Naive thymus-derived CD4-positive, alpha-beta T cell (primary cell): ENCODE measurements at regions of chr22 and their contacts with region 1.

Region 1: DNA sequence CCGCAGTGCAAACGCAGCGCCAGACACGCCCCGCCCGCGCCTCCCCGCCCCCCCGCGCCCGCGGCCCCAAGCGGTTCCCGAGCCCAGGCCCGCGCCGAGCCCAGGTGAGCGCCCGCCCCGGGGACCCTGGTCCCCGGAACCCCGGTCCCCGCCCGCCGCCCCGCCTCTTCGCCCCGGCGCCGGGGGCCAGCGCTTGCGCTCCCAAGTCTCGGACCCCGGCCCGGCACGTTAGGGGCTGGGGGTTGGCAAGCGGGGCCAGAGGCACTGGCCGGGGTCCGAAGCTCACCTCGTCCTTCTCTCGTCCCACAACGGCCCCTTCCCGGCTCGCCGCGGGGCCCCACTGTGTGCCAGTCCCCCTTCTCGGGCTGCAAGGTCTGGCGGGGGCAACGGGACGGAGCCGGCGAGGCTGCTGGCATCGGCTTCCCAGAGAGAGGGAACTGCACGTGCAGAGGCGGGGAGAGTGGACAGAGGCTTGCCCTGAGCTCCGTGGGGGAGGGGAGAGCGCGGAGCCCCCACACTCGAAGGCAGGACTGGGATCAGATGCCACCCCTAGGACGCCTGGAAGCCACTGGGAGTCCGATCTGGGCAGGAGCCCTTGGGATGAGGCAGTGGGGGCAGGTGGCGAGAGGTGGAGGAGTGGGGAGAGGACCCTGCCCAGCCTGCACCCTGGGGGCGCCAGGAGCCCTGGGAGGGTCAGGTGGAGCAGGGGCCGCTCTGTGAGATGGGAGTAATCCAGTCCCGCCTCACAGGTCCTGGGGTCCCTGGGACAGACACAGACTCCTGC is 1.8 kb upstream of the AIFM3 start:
- DNase-seq: no peak
- ATAC-seq: peak; percentile 44
- H3K4me3 ChIP-seq: no peak overlapping the region
- H3K4me3 Mint-ChIP-seq: peak overlapping the region in 8 of 10 donors; percentile 7 to 71 (median 52)
- H3K27ac ChIP-seq: peak overlapping the region; percentile 29
- H3K27ac Mint-ChIP-seq: no peak overlapping the region
- H3K4me1 ChIP-seq: no peaks in the 10 kb centered on the region
- H3K4me1 Mint-ChIP-seq: peaks cover 0 to 17% (median 12%) of the 10 kb centered on the region in 7 donors
- H3K27me3 ChIP-seq: no peaks in the 10 kb centered on the region
- H3K27me3 Mint-ChIP-seq: peaks cover 2 to 31% (median 8%) of the 10 kb centered on the region in 5 donors

Region 2: DNA sequence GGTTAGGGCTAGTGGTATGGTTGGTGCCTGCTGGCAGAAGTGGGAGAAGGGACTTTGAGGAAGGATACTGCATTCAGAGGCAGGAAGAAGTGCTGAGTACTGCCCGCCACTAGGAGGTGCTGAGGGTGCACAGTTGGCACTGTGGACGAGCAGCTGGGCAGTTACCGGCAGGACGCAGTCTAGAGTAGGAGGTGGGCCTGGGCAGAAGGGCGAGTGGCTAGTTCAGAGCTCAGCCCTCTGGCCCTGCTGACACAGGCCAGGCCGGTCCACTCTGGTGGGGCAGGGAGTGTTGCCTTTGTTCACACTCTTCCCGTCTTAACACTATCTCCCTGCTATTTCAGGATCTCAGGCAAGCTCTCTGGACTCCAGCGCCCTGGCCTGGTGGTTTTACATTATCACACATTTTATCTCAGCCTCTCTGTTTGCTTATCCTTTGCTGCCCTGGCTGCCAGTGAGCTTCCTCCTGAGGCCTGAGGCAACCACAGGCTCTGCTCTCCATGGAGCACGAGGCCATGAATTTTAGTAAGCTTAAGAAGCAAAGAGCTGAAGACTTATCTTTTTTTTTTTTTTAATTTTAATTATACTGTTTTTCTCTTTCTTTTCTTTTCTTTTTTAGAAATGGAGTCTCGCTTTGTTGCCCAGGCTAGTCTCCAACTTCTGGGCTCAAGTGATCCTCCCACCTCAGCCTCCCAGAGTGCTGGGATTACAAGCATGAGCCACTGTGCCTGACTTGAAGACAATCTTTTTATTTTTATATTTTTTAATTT is 79.6 kb before region 1 on chr22:
- CTCF ChIA-PET with region 1: no interaction called
- POLR2A ChIA-PET with region 1: no interaction called
- intact Hi-C with region 1: loop called in 1 of 2 experiments (anchors 1 kb)
- DNase-seq: peak in 7 of 9 donors; percentile 2 to 42 (median 14)
- ATAC-seq: peak; percentile 98
- H3K4me3 ChIP-seq: no peak overlapping the region
- H3K4me3 Mint-ChIP-seq: no peak overlapping the region
- H3K27ac ChIP-seq: peak overlapping the region; percentile 0
- H3K27ac Mint-ChIP-seq: peak overlapping the region in 1 of 9 donors; percentile 5
- H3K4me1 ChIP-seq: no peaks in the 10 kb centered on the region
- H3K4me1 Mint-ChIP-seq: peaks cover 0 to 2% (median 0%) of the 10 kb centered on the region in 7 donors
- H3K27me3 ChIP-seq: no peaks in the 10 kb centered on the region
- H3K27me3 Mint-ChIP-seq: no peaks in the 10 kb centered on the region

Region 3: DNA sequence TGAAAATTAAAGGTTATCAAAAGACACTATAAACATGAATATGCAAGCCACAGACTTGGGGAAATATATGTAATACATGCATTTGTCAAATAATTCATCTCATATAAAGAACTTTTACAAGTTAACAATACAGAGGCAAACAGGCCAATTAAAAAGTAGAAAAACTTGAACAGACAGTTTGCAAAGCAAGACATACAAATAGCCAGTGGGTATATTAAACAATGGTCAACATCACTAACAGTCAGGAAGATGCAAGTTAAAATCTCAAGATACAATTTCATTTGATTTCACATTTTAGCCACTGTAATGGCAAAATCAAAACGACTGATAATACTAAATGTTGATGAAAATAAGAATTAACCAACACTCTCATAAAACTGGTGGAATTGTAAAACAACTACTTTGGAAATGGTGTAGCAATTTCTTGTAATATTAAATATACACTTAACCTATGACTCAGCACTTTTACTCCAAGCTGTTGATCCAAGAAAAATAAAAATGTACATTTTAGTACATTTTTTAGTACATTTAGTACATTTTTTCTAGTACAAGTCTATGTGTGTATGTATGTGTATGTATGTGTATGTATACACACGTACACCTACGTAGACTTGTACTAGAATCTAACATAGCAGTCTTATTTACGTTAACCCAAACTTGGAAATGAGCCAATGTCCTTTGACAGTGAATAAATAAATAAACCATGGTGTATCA is 143.3 kb after region 1 on chr22:
- CTCF ChIA-PET with region 1: no interaction called
- POLR2A ChIA-PET with region 1: no interaction called
- intact Hi-C with region 1: loop called in 1 of 2 experiments (anchors 10 kb)
- DNase-seq: no peak
- ATAC-seq: no peak
- H3K4me3 ChIP-seq: no peak overlapping the region
- H3K4me3 Mint-ChIP-seq: no peak overlapping the region
- H3K27ac ChIP-seq: no peak overlapping the region
- H3K27ac Mint-ChIP-seq: no peak overlapping the region
- H3K4me1 ChIP-seq: no peaks in the 10 kb centered on the region
- H3K4me1 Mint-ChIP-seq: peaks cover 0 to 5% (median 0%) of the 10 kb centered on the region in 7 donors
- H3K27me3 ChIP-seq: no peaks in the 10 kb centered on the region
- H3K27me3 Mint-ChIP-seq: peaks cover 0 to 33% (median 14%) of the 10 kb centered on the region in 5 donors